Activated naive CD4-positive, alpha-beta T cell treated with anti-CD3 and anti-CD28 coated beads, Interleukin-2, amount 10 ng/mL, durations not matched to agents 7 days and 5 days (primary cell): ENCODE measurements at regions of chr22 and their contacts with region 1.

Region 1: DNA sequence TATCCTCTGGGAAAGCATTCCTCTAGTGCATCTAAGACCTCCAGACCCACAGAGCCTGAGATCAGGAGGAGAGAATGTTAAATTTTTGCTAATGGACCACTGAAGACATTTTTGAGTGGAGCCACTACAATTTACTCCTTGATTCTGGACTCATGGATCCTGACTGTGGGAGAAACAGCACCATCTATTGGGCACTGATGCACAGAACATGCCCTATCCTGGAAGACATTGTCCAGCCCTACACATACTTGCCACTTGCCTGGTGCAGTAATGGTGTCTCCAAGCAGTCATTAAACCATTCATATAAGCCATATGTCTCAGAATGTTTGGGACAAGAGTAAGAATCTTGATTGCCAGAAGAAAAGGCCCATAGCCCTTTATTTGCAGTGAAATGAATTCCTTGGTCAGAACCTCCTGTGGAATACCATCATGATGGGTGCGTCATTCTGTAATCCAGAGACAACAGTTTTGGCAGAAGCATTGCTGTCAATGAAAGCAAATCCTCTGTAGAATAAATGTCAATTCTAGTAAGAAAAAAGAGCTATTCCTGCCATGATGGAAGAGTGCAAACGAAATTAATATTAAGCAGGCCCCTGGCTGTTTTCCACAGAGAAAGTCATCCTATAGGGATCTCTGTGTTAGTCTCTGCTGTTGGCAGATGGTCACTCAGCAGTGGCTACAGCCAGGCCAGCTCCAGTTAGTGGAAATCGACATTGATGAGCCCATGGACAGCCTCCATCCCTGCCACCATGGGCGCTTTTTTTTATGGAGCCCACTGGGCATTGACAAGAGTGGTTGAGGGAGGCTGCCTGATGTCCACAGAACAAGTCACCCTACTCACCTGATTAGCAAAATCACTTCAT is 43.5 kb downstream of the GGTLC2 start:
- DNase-seq: peak; percentile 60
- H3K4me3 Mint-ChIP-seq: no peak overlapping the region
- H3K27ac Mint-ChIP-seq: no peak overlapping the region
- H3K4me1 Mint-ChIP-seq: no peaks in the 10 kb centered on the region
- H3K27me3 Mint-ChIP-seq: peaks cover 8% of the 10 kb centered on the region

Region 2: DNA sequence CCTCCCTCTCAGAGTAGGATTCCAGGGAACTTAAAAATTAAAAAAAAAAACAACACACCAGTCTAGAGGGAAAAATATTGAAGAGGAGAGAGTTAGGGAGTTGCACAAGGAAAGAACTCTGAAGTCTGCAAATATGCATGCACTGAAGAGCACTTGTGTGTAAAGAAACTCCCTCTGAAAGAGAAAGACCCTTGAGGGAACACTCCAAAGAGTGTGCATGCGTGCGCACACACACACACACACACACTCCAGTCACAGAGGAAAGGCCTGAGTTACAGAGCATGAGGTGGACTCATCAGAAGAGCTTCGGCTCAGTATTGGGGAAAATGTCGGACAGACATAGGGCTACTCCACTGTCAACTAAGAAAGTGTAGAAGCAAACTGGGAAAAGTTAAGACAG is 13.4 kb before region 1 on chr22:
- CTCF ChIA-PET with region 1: interaction called, 11 read pairs
- DNase-seq: no peak
- H3K4me3 Mint-ChIP-seq: no peak overlapping the region
- H3K27ac Mint-ChIP-seq: no peak overlapping the region
- H3K4me1 Mint-ChIP-seq: no peaks in the 10 kb centered on the region
- H3K27me3 Mint-ChIP-seq: peaks cover 25% of the 10 kb centered on the region

Region 3: GRCh38 chr22:22865311-22866072 is 177.6 kb after region 1 on chr22:
- CTCF ChIA-PET with region 1: no interaction called
- DNase-seq: peak; percentile 64
- H3K4me3 Mint-ChIP-seq: no peak overlapping the region
- H3K27ac Mint-ChIP-seq: no peak overlapping the region
- H3K4me1 Mint-ChIP-seq: peaks cover 35% of the 10 kb centered on the region
- H3K27me3 Mint-ChIP-seq: peaks cover 51% of the 10 kb centered on the region